Caco-2 (cell line): ENCODE measurements at regions of chrX and their contacts with region 1.

Region 1: DNA sequence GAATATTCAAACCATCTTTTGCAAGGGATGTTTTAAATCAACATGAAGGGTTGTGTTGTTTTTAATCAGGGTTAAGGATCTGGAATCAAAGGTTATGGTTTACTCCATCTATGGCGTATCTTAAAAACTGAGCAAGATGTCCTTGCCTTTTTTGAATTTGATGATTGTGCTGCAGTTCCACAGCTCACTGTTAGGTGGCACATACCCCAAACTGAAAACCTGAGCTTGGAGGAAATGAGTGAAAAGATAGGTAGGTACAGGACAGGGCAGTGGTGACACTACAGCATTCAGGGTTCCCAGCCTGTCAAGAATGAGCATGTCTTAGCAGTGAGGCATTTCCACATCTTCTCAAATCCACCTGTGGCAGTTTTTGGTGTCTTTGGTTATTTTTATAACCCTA is 13.1 kb upstream of the EOLA1 start:
- DNase-seq: peak in 1 of 2 experiments; percentile 26
- H3K4me3 ChIP-seq: no peak overlapping the region
- H3K4me3 Mint-ChIP-seq: no peak overlapping the region
- H3K27ac Mint-ChIP-seq: no peak overlapping the region
- H3K4me1 ChIP-seq: peaks cover 8% of the 10 kb centered on the region
- H3K4me1 Mint-ChIP-seq: no peaks in the 10 kb centered on the region
- H3K27me3 ChIP-seq: no peaks in the 10 kb centered on the region
- H3K27me3 Mint-ChIP-seq: no peaks in the 10 kb centered on the region
- CTCF ChIP-seq: peak in 1 of 2 experiments; percentile 58

Region 2: GRCh38 chrX:149286940-149287349 is 240.8 kb before region 1 on chrX:
- CTCF ChIA-PET with region 1: no interaction called
- POLR2A ChIA-PET with region 1: no interaction called
- intact Hi-C with region 1: no loop called
- DNase-seq: peak; percentile 21 to 33
- H3K4me3 ChIP-seq: no peak overlapping the region
- H3K4me3 Mint-ChIP-seq: no peak overlapping the region
- H3K27ac Mint-ChIP-seq: no peak overlapping the region
- H3K4me1 ChIP-seq: no peaks in the 10 kb centered on the region
- H3K4me1 Mint-ChIP-seq: no peaks in the 10 kb centered on the region
- H3K27me3 ChIP-seq: no peaks in the 10 kb centered on the region
- H3K27me3 Mint-ChIP-seq: peaks cover 3% of the 10 kb centered on the region
- CTCF ChIP-seq: peak; percentile 50 to 66

Region 3: DNA sequence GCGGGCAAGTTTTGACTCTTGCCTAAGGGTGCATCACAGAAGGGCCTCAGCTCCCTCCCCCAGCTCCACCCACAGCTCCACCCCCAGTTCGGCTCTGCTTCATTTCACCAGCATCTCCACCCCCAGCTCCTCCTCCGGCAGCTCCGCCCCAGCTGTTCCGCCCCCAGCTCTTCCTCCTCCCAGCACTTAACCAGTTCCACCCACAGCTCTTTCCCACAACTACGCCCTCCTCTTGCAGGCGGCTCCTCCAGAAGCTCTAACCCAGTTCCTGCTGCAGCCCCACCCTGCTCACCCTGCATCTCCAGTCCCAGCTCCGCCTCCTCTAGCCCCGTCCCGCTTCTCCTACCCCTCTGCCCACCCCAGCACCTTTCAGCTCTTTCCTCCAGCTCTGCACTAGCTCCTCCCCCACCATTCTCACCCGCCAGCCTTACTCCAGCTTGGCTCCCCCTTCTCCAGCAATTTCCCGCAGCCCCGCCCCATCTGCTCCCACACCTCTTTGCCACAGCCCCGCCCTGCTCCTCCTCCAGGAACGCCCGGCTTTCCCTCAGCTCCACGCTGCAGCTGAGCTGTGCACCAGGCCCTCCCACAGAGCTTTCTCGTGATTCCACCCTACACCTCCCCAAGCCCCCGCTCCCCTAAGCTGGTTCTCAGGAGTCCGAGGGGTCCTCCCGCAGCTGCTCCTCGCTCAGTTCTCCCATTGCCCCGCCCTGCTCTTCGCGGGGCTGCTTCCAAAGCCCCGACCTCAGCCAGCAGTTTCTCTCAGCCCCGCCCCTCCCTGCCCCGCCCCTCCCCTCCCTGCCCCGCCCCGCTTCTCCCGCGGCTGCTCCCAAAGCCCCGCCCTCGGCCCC is 11.8 kb after region 1 on chrX:
- CTCF ChIA-PET with region 1: interaction called, 11 read pairs
- POLR2A ChIA-PET with region 1: interaction called, 3 read pairs
- intact Hi-C with region 1: no loop called
- DNase-seq: peak; percentile 86 to 92
- H3K4me3 ChIP-seq: peak overlapping the region; percentile 53
- H3K4me3 Mint-ChIP-seq: peak overlapping the region; percentile 89
- H3K27ac Mint-ChIP-seq: peak overlapping the region; percentile 98
- H3K4me1 ChIP-seq: no peaks in the 10 kb centered on the region
- H3K4me1 Mint-ChIP-seq: no peaks in the 10 kb centered on the region
- H3K27me3 ChIP-seq: no peaks in the 10 kb centered on the region
- H3K27me3 Mint-ChIP-seq: no peaks in the 10 kb centered on the region
- CTCF ChIP-seq: no peak

Region 4: DNA sequence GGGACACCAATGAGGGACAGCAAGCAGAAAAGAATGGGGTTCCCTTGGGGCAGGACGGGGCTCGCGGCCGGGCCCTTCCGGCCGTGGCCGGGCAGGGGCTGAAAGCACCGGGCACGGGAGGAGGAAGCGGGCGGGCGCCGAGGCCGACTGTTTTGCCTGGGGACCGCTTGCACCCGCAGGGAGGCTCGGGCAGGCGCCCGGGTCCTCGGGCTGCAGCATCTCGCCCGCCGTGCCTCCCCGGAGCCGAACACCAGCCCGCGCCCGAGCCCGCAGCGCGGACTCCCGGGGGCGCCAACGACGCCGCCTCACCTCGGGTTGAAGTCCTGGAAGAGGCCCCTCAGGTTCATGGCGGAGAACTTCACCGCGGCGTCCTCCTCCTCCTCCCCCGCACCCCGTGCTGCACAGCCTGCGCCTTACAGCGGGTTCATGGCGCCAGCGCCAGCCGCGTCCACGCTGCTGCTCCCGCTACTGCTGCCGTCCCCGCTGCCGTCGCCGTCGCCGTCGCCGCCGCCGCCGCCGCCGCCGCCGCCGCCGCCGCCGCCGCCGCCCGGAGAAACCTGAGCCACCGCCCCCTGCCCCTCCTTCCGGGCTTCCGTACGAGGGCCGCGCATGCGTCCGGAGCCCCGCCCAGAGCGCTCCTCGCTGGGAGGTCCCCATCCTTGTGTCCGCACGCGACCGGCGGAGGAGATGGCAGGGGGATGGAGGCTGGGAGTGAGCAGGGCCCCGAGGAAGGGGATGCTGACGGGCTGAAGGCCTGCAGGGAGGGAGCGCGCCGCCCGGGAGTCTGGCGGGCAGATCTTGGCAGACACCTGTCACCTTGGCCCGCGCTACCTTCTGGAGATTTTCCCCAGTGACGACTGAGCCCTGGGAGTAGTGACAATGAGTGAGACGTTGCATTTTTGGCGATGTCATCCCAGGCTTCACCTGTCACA is 103.8 kb after region 1 on chrX and contains the start of gene TMEM185A:
- CTCF ChIA-PET with region 1: no interaction called
- POLR2A ChIA-PET with region 1: no interaction called
- intact Hi-C with region 1: no loop called
- DNase-seq: peak; percentile 62 to 68
- H3K4me3 ChIP-seq: peak within 1 kb of the TSS; percentile 77
- H3K4me3 Mint-ChIP-seq: peak within 1 kb of the TSS; percentile 94
- H3K27ac Mint-ChIP-seq: peak within 1 kb of the TSS; percentile 79
- H3K4me1 ChIP-seq: peaks cover 13% of the 10 kb centered on the region; the same call in 1 of the 2 replicates
- H3K4me1 Mint-ChIP-seq: peaks cover 23% of the 10 kb centered on the region
- H3K27me3 ChIP-seq: no peaks in the 10 kb centered on the region
- H3K27me3 Mint-ChIP-seq: peaks cover 7% of the 10 kb centered on the region
- CTCF ChIP-seq: no peak
- total RNA-seq, gene TMEM185A: 14.2 and 17.1 TPM in 2 replicates